HCT116 (cell line): ENCODE measurements at regions of chr3 and their contacts with region 1.

Region 1: DNA sequence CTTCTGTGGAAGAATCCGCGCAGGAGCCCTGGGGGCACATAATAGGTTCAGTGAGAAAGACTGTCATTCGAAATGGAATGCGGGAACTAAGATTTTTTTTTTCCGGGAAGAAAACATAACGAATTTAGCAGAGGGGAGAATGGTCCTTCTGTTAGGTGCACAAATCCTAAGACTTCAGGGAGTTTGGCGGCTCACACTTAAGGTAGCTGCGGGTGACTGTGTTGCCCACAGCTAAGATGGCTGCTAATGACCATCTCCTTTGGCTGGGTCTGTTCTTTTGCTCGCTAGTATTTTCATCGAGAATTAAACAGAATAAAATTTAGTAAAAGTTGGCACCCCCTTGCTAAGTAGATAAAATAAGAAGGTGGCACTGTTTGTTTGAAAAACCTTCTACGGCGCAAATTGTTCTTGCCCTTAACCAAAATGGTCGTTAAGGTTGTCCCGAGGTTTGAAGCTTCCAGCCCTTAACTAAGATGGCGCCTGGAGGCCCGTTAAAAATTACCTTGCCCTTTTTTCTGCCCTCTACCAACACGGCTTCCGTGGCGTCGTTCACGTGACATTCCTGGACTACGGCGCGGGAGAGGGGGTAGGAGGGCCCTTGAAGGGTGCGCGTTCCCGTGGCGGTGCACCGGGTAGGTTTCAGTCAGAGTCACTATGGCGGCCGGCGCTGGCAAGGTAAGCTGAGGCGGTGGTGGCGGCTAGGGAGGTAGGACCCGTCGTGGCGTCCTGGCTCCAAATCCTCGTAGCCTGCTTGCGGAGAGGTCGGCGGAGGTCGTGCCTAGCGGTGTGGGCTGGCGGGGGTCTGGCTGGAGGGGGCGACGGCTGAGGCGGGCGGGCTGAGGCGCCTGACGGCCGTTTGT is at the start of gene SLMAP:
- DNase-seq: peak; percentile 96
- ATAC-seq: peak; percentile 86
- H3K4me3 ChIP-seq: peak within 1 kb of the TSS; percentile 79 to 82
- H3K27ac ChIP-seq: peak within 1 kb of the TSS; percentile 82
- H3K4me1 ChIP-seq: peaks cover 33 to 62% of the 10 kb centered on the region in 2 experiments
- H3K27me3 ChIP-seq: no peaks in the 10 kb centered on the region
- CTCF ChIP-seq: no peak
- POLR2A ChIP-seq: peak; percentile 57
- RAD21 ChIP-seq: no peak
- total RNA-seq, gene SLMAP: 81.0 TPM

Region 2: DNA sequence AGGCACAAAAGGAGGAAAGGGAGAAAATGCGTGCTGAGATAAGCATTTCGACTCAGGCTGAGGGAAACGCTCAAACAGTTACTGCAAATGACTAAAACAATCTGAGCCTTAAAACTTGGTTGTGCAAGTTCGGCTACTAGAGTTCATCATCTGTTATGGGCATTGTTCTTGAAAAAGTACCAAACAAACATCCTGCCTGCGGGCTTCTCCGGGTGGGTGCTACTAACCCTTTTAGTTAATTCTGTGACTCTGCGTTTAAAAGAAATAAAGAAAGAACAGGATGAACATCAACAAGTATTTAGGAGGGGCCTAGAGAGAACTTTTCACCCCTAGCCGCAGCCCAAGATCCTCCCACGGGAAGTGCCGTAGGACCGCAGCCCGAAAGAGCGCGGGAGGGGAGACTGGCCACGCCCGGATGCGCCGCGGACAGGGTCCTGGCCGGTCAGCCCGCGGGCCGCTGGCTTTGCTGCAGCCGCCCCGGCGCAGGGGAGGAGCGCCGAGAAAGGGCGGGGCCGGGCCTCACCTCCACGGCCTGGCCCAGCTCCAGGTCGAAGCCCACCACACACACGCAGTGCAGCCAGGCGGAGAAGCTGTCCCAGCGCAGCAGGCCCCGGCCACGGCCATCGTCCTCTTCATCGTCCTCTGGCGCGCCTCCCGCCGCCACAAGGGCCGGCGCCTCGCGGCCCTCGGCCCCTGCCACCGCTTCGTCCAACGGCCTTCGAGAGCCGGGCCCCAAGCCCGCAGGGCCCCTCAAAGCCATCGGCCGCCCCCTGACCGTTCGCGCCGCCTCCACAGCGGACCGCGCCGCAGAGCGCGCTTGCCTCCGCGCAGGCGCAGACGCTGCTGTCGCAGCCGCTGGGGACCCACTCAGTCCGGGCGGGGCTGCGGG is 63.4 kb before region 1 on chr3 and contains the start of gene DENND6A:
- CTCF ChIA-PET with region 1: no interaction called
- POLR2A ChIA-PET with region 1: interaction called, 4 read pairs
- RAD21 ChIA-PET with region 1: interaction called in 1 of 2 experiments, 4 read pairs
- intact Hi-C with region 1: loop called (anchors 2 kb)
- DNase-seq: peak; percentile 89
- ATAC-seq: peak; percentile 92
- H3K4me3 ChIP-seq: peak within 1 kb of the TSS; percentile 69 to 90
- H3K27ac ChIP-seq: peak within 1 kb of the TSS; percentile 87
- H3K4me1 ChIP-seq: peaks cover 7 to 32% of the 10 kb centered on the region in 2 experiments; a peak in 3 of 4 replicates
- H3K27me3 ChIP-seq: no peaks in the 10 kb centered on the region
- CTCF ChIP-seq: no peak
- POLR2A ChIP-seq: peak; percentile 95
- RAD21 ChIP-seq: no peak
- total RNA-seq, gene DENND6A: 22.3 TPM

Region 3: DNA sequence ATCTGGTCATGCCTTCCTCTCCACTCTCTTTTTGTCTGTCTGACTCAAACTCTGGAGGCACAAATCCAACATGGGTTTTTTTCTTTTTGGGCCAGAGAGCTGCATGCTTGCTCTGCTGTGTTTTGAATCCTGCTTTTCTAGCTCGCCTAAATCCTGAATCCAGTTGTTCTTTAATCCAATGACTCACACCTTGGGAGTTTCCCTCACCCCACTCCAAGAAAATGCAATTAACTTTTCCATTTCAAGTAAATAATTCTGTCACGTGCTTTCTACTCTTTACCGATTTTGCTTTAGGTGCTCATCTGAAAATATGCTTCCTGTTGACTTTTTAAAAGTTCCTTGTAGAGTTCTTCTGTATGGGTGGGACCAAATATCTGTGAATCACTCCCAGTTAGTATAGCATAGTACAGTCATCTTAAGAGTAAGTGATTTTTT is 47.8 kb after region 1 on chr3:
- CTCF ChIA-PET with region 1: no interaction called
- POLR2A ChIA-PET with region 1: interaction called, 4 read pairs
- RAD21 ChIA-PET with region 1: interaction called in 1 of 2 experiments, 3 read pairs
- intact Hi-C with region 1: loop called (anchors 2 kb)
- DNase-seq: peak; percentile 96
- ATAC-seq: peak; percentile 75
- H3K4me3 ChIP-seq: peak overlapping the region in 1 of 2 experiments; percentile 27; a peak in 2 of 4 replicates
- H3K27ac ChIP-seq: peak overlapping the region; percentile 77
- H3K4me1 ChIP-seq: peaks cover 49 to 66% of the 10 kb centered on the region in 2 experiments
- H3K27me3 ChIP-seq: no peaks in the 10 kb centered on the region
- CTCF ChIP-seq: no peak
- POLR2A ChIP-seq: no peak
- RAD21 ChIP-seq: peak; percentile 33